ENCODE measurements at regions of chr13 and their contacts with region 1.

Region 1: GRCh38 chr13:99436686-99437416 is 64.4 kb upstream of the TM9SF2 start:
- DNase-seq: peak; percentile 92 to 98 (median 95)
- ATAC-seq: peak; percentile 50
- H3K4me3 ChIP-seq: no peak overlapping the region
- H3K4me3 Mint-ChIP-seq: peak overlapping the region; percentile 63
- H3K27ac ChIP-seq: peak overlapping the region; percentile 27 to 33
- H3K27ac Mint-ChIP-seq: peak overlapping the region; percentile 55
- H3K4me1 ChIP-seq: peaks cover 57% of the 10 kb centered on the region
- H3K4me1 Mint-ChIP-seq: peaks cover 52% of the 10 kb centered on the region
- H3K27me3 ChIP-seq: no peaks in the 10 kb centered on the region
- H3K27me3 Mint-ChIP-seq: no peaks in the 10 kb centered on the region
- CTCF ChIP-seq: peak; percentile 99

Region 2: DNA sequence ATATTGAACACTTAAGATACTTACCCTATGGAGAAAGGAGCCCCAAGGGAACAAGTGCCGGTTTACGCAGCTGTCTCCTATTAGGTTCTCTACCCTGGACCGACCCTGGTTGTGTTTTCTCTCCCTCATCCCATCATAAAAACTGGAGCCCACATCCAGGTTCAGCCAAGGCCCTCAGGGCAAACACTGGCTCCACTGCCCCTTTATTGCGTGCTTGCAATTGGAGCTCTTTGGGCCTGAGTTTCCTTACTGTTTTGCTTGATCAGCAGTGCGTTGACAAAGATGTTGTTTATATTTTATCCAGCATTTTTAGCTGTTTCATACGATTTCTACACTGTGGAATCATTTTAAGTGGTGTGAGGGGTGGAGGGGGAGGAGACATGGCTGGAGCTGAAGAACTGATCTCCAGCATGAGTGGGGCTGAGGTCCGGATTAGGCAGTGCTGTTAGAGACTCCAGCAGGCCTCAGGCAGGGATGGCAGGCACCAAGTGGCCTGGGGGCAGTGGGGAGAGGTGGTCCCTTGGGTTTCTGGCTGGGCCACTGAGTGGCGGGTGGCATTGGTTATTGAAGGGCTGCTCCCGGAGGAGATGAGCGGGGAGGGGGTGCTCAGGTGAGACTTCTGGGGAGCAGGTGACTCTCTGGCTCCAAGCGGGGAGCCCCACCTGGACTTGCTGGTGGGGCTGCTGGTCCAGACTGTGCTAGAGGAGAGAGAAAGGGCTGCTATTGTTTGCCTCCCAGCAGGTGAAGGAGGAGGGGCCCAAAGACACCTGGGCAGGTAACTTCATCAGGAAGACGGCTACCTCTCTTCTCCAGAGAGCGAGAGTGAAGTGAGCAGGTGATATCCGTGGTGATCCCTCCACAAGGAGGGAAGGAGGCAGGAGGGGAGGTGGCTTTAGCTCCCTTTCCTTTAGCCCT is 1197.4 kb before region 1 on chr13:
- CTCF ChIA-PET with region 1: no interaction called
- POLR2A ChIA-PET with region 1: no interaction called
- intact Hi-C with region 1: no loop called
- DNase-seq: no peak
- ATAC-seq: no peak
- H3K4me3 ChIP-seq: no peak overlapping the region
- H3K4me3 Mint-ChIP-seq: no peak overlapping the region
- H3K27ac ChIP-seq: no peak overlapping the region
- H3K27ac Mint-ChIP-seq: no peak overlapping the region
- H3K4me1 ChIP-seq: no peaks in the 10 kb centered on the region
- H3K4me1 Mint-ChIP-seq: no peaks in the 10 kb centered on the region
- H3K27me3 ChIP-seq: no peaks in the 10 kb centered on the region
- H3K27me3 Mint-ChIP-seq: no peaks in the 10 kb centered on the region
- CTCF ChIP-seq: no peak

Region 3: GRCh38 chr13:99087096-99087953 is 349.5 kb before region 1 on chr13:
- CTCF ChIA-PET with region 1: no interaction called
- POLR2A ChIA-PET with region 1: no interaction called
- intact Hi-C with region 1: loop called in 1 of 2 experiments (anchors 2 kb)
- DNase-seq: peak; percentile 84 to 96 (median 93)
- ATAC-seq: peak; percentile 74
- H3K4me3 ChIP-seq: peak overlapping the region; percentile 66 to 78
- H3K4me3 Mint-ChIP-seq: peak overlapping the region; percentile 94
- H3K27ac ChIP-seq: peak overlapping the region; percentile 85 to 93
- H3K27ac Mint-ChIP-seq: peak overlapping the region; percentile 99
- H3K4me1 ChIP-seq: peaks cover 43% of the 10 kb centered on the region
- H3K4me1 Mint-ChIP-seq: peaks cover 43% of the 10 kb centered on the region
- H3K27me3 ChIP-seq: no peaks in the 10 kb centered on the region
- H3K27me3 Mint-ChIP-seq: no peaks in the 10 kb centered on the region
- CTCF ChIP-seq: peak; percentile 46

Region 4: DNA sequence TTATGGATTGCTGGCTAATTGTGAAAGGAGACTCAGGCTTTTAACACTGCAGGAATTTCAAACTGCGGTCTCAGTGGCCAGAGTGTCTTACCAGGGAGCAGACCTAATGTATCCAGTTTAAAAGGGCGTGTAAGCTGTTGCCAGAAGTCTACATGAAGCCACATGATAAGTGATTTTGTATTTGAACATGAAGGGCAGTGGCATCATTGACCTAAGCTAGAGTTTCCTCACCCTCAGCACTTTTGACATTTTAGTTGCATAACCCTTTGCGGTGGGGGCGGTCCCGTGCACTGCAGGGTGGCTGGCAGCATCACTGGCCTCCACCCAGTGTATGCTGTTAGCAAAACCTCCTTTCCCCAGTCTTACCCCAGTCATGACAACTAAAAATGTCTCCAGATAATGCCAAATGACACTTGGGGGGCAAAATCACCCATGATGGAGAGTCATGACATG is 155.0 kb before region 1 on chr13:
- CTCF ChIA-PET with region 1: interaction called, 402 read pairs
- POLR2A ChIA-PET with region 1: interaction called, 3 read pairs
- intact Hi-C with region 1: no loop called
- DNase-seq: peak in 6 of 9 experiments; percentile 59 to 81 (median 71)
- ATAC-seq: peak; percentile 65
- H3K4me3 ChIP-seq: no peak overlapping the region
- H3K4me3 Mint-ChIP-seq: peak overlapping the region; percentile 38
- H3K27ac ChIP-seq: peak overlapping the region; percentile 53 to 73
- H3K27ac Mint-ChIP-seq: peak overlapping the region; percentile 95
- H3K4me1 ChIP-seq: peaks cover 92% of the 10 kb centered on the region
- H3K4me1 Mint-ChIP-seq: peaks cover 90% of the 10 kb centered on the region
- H3K27me3 ChIP-seq: no peaks in the 10 kb centered on the region
- H3K27me3 Mint-ChIP-seq: no peaks in the 10 kb centered on the region
- CTCF ChIP-seq: no peak

Region 5: GRCh38 chr13:99322297-99323103 is 114.4 kb before region 1 on chr13:
- CTCF ChIA-PET with region 1: interaction called, 12 read pairs
- POLR2A ChIA-PET with region 1: no interaction called
- intact Hi-C with region 1: no loop called
- DNase-seq: peak in 5 of 9 experiments; percentile 40 to 81 (median 46)
- ATAC-seq: peak; percentile 80
- H3K4me3 ChIP-seq: peak overlapping the region in 1 of 2 experiments; percentile 6
- H3K4me3 Mint-ChIP-seq: peak overlapping the region; percentile 57
- H3K27ac ChIP-seq: peak overlapping the region; percentile 22 to 56
- H3K27ac Mint-ChIP-seq: peak overlapping the region; percentile 92
- H3K4me1 ChIP-seq: peaks cover 56% of the 10 kb centered on the region
- H3K4me1 Mint-ChIP-seq: peaks cover 73% of the 10 kb centered on the region
- H3K27me3 ChIP-seq: no peaks in the 10 kb centered on the region
- H3K27me3 Mint-ChIP-seq: no peaks in the 10 kb centered on the region
- CTCF ChIP-seq: no peak

Region 6: DNA sequence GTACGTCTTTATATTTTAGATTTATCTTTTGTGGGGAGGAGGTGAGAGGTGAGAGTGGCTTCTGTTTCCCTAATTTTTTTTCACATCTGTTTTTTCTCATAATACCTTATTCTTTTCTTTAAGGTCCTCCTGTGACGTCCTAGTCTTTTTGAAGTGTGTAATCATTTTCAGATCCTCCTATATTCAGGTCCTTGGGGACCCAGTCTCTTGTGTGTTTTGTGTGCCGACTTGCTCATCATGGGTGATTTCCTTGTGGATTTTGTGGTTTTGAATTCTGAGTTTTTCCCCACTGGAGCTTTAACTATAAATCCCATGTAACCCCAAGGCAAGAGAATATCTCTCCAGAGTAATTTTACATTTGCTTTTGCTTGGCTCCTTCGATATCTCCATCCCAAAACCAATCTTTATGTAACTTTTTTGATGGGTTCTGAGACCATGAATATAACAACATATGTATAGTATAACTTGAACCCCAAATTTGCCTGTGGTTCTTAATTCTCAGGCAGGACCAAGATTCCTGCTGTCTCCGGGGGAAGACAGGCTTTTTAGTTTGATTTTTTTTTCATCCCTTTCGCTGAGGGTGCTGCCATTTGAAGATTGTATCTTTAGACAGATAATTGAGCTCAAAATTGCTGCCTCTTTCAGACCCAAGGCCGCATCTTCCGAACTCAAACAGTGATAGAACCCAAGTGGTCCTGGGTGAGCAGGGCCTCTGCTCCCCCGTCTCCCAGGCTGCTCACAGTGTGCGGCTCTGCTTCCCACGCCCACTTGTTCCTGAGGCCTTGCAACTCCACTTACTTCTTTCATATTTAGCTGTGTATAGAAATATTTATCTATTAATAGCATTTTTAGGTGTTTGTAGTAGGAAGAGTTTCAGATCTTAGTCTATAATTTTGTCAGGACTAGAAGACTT is 70.5 kb before region 1 on chr13:
- CTCF ChIA-PET with region 1: interaction called, 20 read pairs
- POLR2A ChIA-PET with region 1: no interaction called
- intact Hi-C with region 1: no loop called
- DNase-seq: peak in 4 of 9 experiments; percentile 10 to 53 (median 28)
- ATAC-seq: no peak
- H3K4me3 ChIP-seq: no peak overlapping the region
- H3K4me3 Mint-ChIP-seq: peak overlapping the region; percentile 53
- H3K27ac ChIP-seq: peak overlapping the region; percentile 24 to 61
- H3K27ac Mint-ChIP-seq: peak overlapping the region; percentile 97
- H3K4me1 ChIP-seq: peaks cover 78% of the 10 kb centered on the region
- H3K4me1 Mint-ChIP-seq: peaks cover 88% of the 10 kb centered on the region
- H3K27me3 ChIP-seq: no peaks in the 10 kb centered on the region
- H3K27me3 Mint-ChIP-seq: no peaks in the 10 kb centered on the region
- CTCF ChIP-seq: no peak

Region 7: GRCh38 chr13:99406799-99407201 is 30.1 kb before region 1 on chr13:
- CTCF ChIA-PET with region 1: interaction called, 25 read pairs
- POLR2A ChIA-PET with region 1: no interaction called
- intact Hi-C with region 1: no loop called
- DNase-seq: no peak
- ATAC-seq: no peak
- H3K4me3 ChIP-seq: no peak overlapping the region
- H3K4me3 Mint-ChIP-seq: no peak overlapping the region
- H3K27ac ChIP-seq: no peak overlapping the region
- H3K27ac Mint-ChIP-seq: peak overlapping the region; percentile 58
- H3K4me1 ChIP-seq: peaks cover 8% of the 10 kb centered on the region
- H3K4me1 Mint-ChIP-seq: peaks cover 37% of the 10 kb centered on the region
- H3K27me3 ChIP-seq: no peaks in the 10 kb centered on the region
- H3K27me3 Mint-ChIP-seq: no peaks in the 10 kb centered on the region
- CTCF ChIP-seq: no peak

Region 8: GRCh38 chr13:100674848-100675660 is 1238.2 kb after region 1 on chr13:
- CTCF ChIA-PET with region 1: no interaction called
- POLR2A ChIA-PET with region 1: no interaction called
- intact Hi-C with region 1: loop called in 1 of 2 experiments (anchors 10 kb)
- DNase-seq: peak; percentile 99 to 100 (median 100)
- ATAC-seq: peak; percentile 92
- H3K4me3 ChIP-seq: peak overlapping the region; percentile 88 to 98
- H3K4me3 Mint-ChIP-seq: peak overlapping the region; percentile 95
- H3K27ac ChIP-seq: peak overlapping the region; percentile 55 to 78
- H3K27ac Mint-ChIP-seq: peak overlapping the region; percentile 89
- H3K4me1 ChIP-seq: peaks cover 14% of the 10 kb centered on the region
- H3K4me1 Mint-ChIP-seq: peaks cover 29% of the 10 kb centered on the region
- H3K27me3 ChIP-seq: no peaks in the 10 kb centered on the region
- H3K27me3 Mint-ChIP-seq: no peaks in the 10 kb centered on the region
- CTCF ChIP-seq: no peak

Measured in CD8-positive, alpha-beta T cell (primary cell).